AG04450 (cell line): ENCODE measurements at regions of chr7 and their contacts with region 1.

Region 1: GRCh38 chr7:16645593-16646471 is at the starts of genes ANKMY2 and BZW2:
- DNase-seq: peak; percentile 88
- H3K4me3 ChIP-seq: peak within 1 kb of the TSS; percentile 91
- H3K27ac ChIP-seq: peak within 1 kb of the TSS; percentile 90
- H3K27me3 ChIP-seq: no peaks in the 10 kb centered on the region
- CTCF ChIP-seq: no peak
- polyA plus RNA-seq, gene ANKMY2: 25.0 and 31.8 TPM in 2 replicates
- polyA plus RNA-seq, gene BZW2: 84.4 and 87.6 TPM in 2 replicates

Region 2: DNA sequence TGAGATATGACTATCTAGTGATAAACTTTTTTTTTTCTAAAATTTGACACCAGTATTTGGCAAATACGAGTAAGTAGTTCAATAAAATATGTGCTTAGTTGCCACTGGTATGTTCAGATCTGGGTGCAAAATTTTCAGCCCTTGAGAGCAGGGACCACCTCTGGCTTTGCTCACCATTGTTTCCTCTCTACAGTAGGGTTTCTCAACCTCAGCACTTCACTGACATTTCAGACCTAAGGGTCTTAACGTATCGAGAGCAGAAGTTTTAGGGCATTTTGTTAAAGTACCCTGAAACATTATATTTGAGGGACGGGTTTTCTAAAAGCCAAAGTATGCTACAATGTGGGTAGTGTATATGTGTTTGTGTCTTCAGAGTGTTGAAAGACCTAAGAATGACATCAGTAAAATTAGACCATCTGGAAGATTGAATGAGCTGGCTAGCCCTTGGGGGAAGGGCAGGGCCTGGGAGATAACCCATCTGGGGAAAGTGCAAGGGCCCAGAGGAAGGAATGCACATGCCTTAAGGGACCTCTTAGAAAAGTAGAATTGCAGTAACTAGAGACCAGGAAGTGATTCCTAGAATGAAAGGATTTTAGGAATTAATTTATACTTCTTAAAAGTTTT is 11.9 kb after region 1 on chr7:
- CTCF ChIA-PET with region 1: interaction called, 3 read pairs
- POLR2A ChIA-PET with region 1: interaction called, 11 read pairs
- DNase-seq: peak; percentile 85
- H3K4me3 ChIP-seq: no peak overlapping the region
- H3K27ac ChIP-seq: peak overlapping the region; percentile 75
- H3K27me3 ChIP-seq: no peaks in the 10 kb centered on the region
- CTCF ChIP-seq: peak; percentile 58

Region 3: DNA sequence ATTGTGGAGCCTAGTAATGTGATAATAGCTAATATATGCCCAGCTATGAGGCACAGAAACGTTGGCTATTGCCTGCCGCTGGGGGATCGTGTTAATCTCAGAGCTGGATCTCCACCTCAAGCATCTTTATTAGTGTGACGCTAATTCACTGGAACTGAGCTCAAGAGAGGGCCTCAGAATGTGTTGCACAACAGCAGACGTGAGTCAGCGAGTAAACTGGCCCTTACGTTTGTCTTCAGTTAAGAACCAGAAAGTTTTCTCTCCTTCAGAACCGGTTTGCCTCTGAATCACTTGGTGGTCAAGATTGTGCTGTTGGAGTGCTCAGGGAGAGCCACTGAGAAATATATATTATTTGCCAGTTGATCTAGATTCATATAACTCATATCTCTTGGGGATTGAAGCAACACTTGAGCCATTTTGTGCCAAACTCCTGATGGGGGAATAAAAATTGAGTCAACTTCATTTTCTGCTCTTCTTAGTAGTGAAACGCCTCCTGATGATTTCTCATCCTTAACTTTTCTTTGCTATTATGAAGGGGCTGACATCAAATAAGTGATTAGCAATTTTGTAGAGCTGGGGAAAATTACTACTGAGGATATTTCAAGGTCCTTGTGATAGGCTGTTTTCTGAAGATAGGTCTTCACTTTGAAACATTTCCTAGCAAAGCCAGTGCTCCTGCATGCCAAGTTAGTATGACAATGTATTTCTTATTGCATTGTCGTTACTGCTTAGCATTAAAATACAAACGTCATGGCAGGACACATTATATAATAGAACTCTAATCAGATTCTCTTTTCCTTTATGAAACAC is 22.4 kb after region 1 on chr7:
- CTCF ChIA-PET with region 1: interaction called, 4 read pairs
- POLR2A ChIA-PET with region 1: interaction called, 13 read pairs
- DNase-seq: peak; percentile 95
- H3K4me3 ChIP-seq: no peak overlapping the region
- H3K27ac ChIP-seq: peak overlapping the region; percentile 59
- H3K27me3 ChIP-seq: no peaks in the 10 kb centered on the region
- CTCF ChIP-seq: peak; percentile 33; the same call in 1 of the 2 replicates